ENCODE measurements at regions of chr15 and their contacts with region 1.

Region 1: GRCh38 chr15:51649659-51650521 is 27.3 kb upstream of the DMXL2 start:
- DNase-seq: peak; percentile 75 to 85
- ATAC-seq: peak; percentile 96 to 99
- H3K4me3 ChIP-seq: no peak overlapping the region
- H3K27ac ChIP-seq: no peak overlapping the region
- H3K4me1 ChIP-seq: no peaks in the 10 kb centered on the region
- CTCF ChIP-seq: peak; percentile 98
- EP300 ChIP-seq: no peak
- POLR2A ChIP-seq: no peak
- RAD21 ChIP-seq: peak; percentile 97 to 99

Region 2: DNA sequence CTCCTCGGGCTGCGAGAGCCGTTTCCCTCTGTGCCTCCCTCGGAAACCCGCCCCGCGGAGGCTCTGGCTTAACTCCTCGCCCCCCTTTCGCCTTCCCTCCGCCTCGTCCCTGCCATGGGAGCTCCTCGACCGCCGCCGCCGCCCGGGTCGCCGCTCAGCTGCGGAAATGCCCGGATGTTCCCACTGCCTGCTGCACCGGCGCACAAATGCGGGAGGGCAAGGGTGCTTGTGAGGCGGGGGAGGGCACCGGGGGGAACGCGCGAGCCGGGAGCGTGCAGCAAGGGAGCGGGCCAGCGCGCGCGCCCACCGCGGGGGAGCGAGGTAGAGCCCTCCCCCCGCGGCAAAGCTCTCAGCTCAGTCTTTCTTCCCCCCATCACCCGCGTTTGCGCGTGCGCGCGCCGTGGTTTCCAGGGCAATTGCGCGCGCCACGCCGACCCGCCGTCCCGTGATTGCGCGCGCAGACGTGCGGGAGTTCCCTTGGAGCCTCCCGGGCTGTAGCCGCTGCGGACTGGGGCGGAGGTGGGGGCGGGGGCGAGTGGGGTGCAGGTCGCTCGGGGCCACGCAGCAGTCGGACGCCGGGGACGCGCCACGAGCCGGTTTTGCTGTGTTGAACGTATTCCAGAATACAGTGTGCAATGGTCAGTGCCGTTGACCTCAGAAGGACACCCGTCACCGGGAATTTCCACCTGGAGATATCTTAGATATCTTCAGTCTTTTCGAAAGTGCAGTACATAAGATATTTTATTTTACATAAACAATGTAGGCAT is 27.1 kb before region 1 on chr15 and contains the start of gene DMXL2:
- CTCF ChIA-PET with region 1: interaction called, 24 read pairs
- POLR2A ChIA-PET with region 1: no interaction called
- DNase-seq: peak; percentile 95
- ATAC-seq: peak; percentile 86 to 88
- H3K4me3 ChIP-seq: peak within 1 kb of the TSS; percentile 91
- H3K27ac ChIP-seq: peak within 1 kb of the TSS; percentile 86 to 91
- H3K4me1 ChIP-seq: peaks cover 39% of the 10 kb centered on the region
- CTCF ChIP-seq: no peak
- EP300 ChIP-seq: no peak
- POLR2A ChIP-seq: peak; percentile 69
- RAD21 ChIP-seq: no peak
- polyA plus RNA-seq, gene DMXL2: 50.9 and 58.7 TPM in 2 replicates

Region 3: GRCh38 chr15:51634591-51635198 is 15.2 kb before region 1 on chr15:
- CTCF ChIA-PET with region 1: interaction called, 63 read pairs
- POLR2A ChIA-PET with region 1: no interaction called
- DNase-seq: no peak
- ATAC-seq: no peak
- H3K4me3 ChIP-seq: no peak overlapping the region
- H3K27ac ChIP-seq: no peak overlapping the region
- H3K4me1 ChIP-seq: no peaks in the 10 kb centered on the region
- CTCF ChIP-seq: no peak
- EP300 ChIP-seq: no peak
- POLR2A ChIP-seq: no peak
- RAD21 ChIP-seq: no peak

Region 4: DNA sequence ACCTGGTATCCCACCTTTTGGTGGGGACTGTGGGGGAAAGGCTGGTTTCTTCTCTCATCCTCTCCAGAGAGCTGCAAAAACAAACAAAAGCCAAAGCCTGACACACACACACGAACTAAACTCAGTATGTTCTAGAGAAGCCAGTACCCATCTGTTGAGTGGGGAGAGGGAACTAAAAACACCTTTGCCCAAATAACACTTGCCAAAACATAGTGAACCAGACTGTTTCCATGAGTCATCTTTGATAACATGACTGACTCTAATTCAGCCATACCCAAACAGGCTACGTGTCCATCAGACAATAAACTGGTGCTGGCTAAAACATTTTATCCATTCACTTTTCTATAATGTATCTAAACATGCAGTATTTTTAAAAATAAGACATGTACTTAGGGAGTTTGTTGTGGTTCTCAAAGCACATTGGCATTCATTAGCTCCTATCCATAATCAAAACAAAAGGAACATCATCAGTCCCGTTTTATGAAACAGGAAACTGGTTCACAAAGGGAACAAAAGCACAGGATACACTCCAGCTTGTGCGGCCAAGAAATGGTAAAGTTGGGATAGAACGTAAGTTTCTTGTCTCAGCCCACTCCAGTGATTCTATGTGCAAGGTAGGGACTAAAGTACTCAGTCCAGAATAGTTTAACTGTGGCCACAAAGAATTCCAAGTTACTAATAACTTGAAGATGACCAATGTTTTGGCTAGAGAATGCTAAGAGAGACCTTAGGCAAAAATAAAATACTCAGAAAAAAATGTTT is 71.5 kb after region 1 on chr15:
- CTCF ChIA-PET with region 1: interaction called, 12 read pairs
- POLR2A ChIA-PET with region 1: no interaction called
- DNase-seq: no peak
- ATAC-seq: no peak
- H3K4me3 ChIP-seq: no peak overlapping the region
- H3K27ac ChIP-seq: no peak overlapping the region
- H3K4me1 ChIP-seq: peaks cover 7% of the 10 kb centered on the region
- CTCF ChIP-seq: no peak
- EP300 ChIP-seq: no peak
- POLR2A ChIP-seq: no peak
- RAD21 ChIP-seq: no peak

Region 5: DNA sequence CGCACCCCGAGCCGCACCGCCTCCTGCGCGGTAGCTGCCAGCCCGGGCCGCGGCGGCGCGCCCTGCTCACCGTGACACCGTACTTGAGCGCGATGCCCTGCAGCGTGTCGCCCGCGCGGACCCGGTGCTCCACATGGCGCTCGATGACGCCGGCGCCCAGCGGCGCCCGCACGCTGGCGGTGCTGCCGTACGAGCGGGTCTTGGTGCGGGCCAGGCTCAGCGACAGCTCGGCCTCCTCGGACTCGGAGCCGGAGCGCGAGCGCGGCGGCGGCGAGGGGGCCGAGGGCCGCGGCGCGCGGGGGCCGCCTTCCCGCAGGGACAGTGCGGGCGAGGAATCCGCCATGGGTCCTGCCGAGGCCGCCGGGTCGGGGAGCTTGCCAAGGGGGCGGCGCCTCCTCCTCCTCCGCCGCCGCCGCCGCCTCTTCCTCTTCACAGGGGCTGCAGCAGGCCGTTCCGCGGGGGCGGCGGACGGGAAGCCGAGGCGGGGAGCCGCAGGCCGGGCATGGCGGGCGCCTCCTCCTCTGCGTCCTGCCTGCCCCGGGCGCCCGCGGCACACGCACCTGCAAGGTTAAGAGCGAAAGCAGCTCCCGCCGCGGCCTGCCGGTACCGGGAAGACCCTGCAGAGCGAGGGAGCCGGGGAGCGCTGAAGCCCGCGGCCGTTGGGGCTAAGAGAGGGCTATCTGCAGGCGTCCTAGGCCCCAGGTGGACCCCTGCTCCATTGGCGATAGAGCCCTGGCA is 87.6 kb after region 1 on chr15 and contains the start of gene LYSMD2:
- CTCF ChIA-PET with region 1: interaction called, 34 read pairs
- POLR2A ChIA-PET with region 1: no interaction called
- DNase-seq: peak; percentile 54 to 59
- ATAC-seq: peak; percentile 85 to 86
- H3K4me3 ChIP-seq: peak within 1 kb of the TSS; percentile 68
- H3K27ac ChIP-seq: peak within 1 kb of the TSS; percentile 86 to 91
- H3K4me1 ChIP-seq: peaks cover 16% of the 10 kb centered on the region
- CTCF ChIP-seq: no peak
- EP300 ChIP-seq: no peak
- POLR2A ChIP-seq: peak; percentile 56
- RAD21 ChIP-seq: no peak
- polyA plus RNA-seq, gene LYSMD2: 29.2 and 32.1 TPM in 2 replicates

Region 6: GRCh38 chr15:51907136-51907914 is 257.4 kb after region 1 on chr15:
- CTCF ChIA-PET with region 1: interaction called, 10 read pairs
- POLR2A ChIA-PET with region 1: no interaction called
- DNase-seq: peak; percentile 39 to 69
- ATAC-seq: peak; percentile 73 to 91
- H3K4me3 ChIP-seq: no peak overlapping the region
- H3K27ac ChIP-seq: peak overlapping the region in 1 of 2 experiments; percentile 47; a peak in 4 of 6 replicates
- H3K4me1 ChIP-seq: peaks cover 53% of the 10 kb centered on the region
- CTCF ChIP-seq: peak; percentile 22; the same call in 1 of the 3 replicates
- EP300 ChIP-seq: no peak
- POLR2A ChIP-seq: no peak
- RAD21 ChIP-seq: peak; percentile 41 to 42; a peak in 4 of 5 replicates

Measured in A549 (cell line).